WTC11 (cell line): ENCODE measurements at regions of chr6 and their contacts with region 1.

Region 1: DNA sequence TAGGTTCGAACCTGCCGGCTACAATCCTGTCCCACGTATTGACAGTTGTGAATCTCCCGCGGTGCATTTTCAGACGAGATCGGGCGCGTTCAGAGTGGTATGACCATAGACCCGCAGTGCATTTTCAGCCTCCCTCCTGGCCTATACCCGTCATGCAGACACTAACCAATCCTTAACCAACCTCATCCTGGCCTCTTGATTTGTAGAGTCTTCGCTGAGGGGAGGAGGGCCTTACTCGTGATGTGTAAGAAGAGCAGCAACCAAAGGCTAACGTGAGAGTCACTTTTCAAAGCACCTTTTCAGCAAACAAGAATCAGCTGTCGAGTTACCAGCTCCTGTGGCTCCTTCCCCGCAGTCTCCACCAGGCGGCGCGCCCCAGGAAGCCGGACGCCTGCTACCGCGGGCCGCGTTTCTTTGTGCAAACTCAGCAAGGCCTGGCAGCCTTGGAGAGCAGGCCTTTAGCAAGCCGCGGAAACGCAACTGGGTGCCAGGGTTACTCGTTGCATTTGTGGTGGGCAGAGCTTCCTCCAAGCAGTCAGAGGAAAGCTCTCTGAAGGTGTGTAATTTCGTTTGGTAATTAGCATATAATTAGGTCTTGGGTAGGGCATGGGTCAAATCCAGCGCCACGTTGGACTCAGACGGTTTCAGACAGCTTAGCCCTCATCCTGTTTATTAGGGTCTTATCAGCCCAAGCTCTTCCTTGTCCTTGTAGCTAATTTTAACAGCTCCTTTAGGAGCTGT is 139.8 kb downstream of the OR2B2 start:
- DNase-seq: peak; percentile 89
- ATAC-seq: peak; percentile 82
- H3K4me3 Mint-ChIP-seq: peak overlapping the region; percentile 59
- H3K27ac Mint-ChIP-seq: no peak overlapping the region; the same call in 1 of the 2 replicates
- H3K4me1 Mint-ChIP-seq: peaks cover 35% of the 10 kb centered on the region
- H3K27me3 Mint-ChIP-seq: peaks cover 100% of the 10 kb centered on the region
- CTCF ChIP-seq: peak; percentile 87

Region 2: GRCh38 chr6:27761391-27761790 is 11.0 kb before region 1 on chr6:
- CTCF ChIA-PET with region 1: interaction called, 57 read pairs
- POLR2A ChIA-PET with region 1: interaction called, 3 read pairs
- DNase-seq: no peak
- ATAC-seq: no peak
- H3K4me3 Mint-ChIP-seq: peak overlapping the region; percentile 85
- H3K27ac Mint-ChIP-seq: no peak overlapping the region
- H3K4me1 Mint-ChIP-seq: peaks cover 34% of the 10 kb centered on the region
- H3K27me3 Mint-ChIP-seq: peaks cover 100% of the 10 kb centered on the region
- CTCF ChIP-seq: no peak

Region 3: GRCh38 chr6:27785294-27785693 is 12.9 kb after region 1 on chr6:
- CTCF ChIA-PET with region 1: interaction called, 36 read pairs
- POLR2A ChIA-PET with region 1: interaction called, 3 read pairs
- DNase-seq: no peak
- ATAC-seq: no peak
- H3K4me3 Mint-ChIP-seq: no peak overlapping the region
- H3K27ac Mint-ChIP-seq: no peak overlapping the region
- H3K4me1 Mint-ChIP-seq: peaks cover 6% of the 10 kb centered on the region
- H3K27me3 Mint-ChIP-seq: peaks cover 74% of the 10 kb centered on the region
- CTCF ChIP-seq: no peak

Region 4: GRCh38 chr6:27879837-27880236 is 107.4 kb after region 1 on chr6:
- CTCF ChIA-PET with region 1: no interaction called
- POLR2A ChIA-PET with region 1: no interaction called
- DNase-seq: no peak
- ATAC-seq: no peak
- H3K4me3 Mint-ChIP-seq: no peak overlapping the region
- H3K27ac Mint-ChIP-seq: no peak overlapping the region; the same call in 1 of the 2 replicates
- H3K4me1 Mint-ChIP-seq: peaks cover 33% of the 10 kb centered on the region
- H3K27me3 Mint-ChIP-seq: no peaks in the 10 kb centered on the region
- CTCF ChIP-seq: no peak